ENCODE measurements at regions of chr14 and their contacts with region 1.

Region 1: GRCh38 chr14:75278422-75279161 is at the start of gene FOS:
- DNase-seq: peak; percentile 90 to 95
- ATAC-seq: peak; percentile 76 to 85 (median 83)
- H3K4me3 ChIP-seq: peak within 1 kb of the TSS; percentile 83
- H3K27ac ChIP-seq: peak within 1 kb of the TSS; percentile 98
- H3K4me1 ChIP-seq: peaks cover 30% of the 10 kb centered on the region
- H3K27me3 ChIP-seq: no peaks in the 10 kb centered on the region
- CTCF ChIP-seq: no peak
- total RNA-seq, gene FOS: 20.7 to 279 (median 95.1) TPM

Region 2: DNA sequence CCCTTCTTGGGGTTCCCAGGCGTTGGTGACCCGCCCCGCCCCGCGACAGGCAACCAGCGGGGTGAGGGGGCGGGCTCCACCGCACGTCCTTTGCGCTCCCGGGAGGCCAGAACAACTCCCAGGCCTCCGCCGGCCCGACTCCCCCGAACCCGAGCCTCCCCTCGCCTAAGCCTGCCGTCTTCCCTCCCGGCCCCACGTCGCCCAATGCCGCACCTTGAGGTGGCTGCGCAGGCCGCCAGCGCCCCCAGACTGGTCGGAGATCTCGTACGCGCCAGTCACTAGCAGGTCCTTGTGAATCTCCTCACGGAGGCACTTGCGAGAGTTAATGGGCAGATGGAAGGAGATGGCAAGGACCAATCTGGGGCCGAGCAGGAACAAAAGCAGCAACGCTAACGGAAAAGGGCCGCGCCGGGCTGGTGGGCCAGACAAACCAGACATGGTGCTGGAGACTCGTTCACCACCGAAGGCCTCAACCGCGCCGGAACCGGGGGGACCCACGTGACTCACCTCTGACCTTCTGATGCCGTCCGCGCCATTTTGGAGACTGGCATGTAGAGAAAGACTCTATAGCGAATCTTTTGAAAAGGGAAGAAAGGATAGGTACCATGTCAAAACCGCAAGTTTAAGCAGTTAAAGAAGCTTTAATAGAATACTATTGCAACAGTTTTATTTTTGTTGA is 102.3 kb before region 1 on chr14 and contains the start of gene TMED10:
- intact Hi-C with region 1: loop called in 1 of 2 experiments (anchors 5 kb)
- DNase-seq: peak; percentile 89 to 95
- ATAC-seq: peak; percentile 95
- H3K4me3 ChIP-seq: peak within 1 kb of the TSS; percentile 90
- H3K27ac ChIP-seq: peak within 1 kb of the TSS; percentile 99
- H3K4me1 ChIP-seq: peaks cover 23% of the 10 kb centered on the region
- H3K27me3 ChIP-seq: no peaks in the 10 kb centered on the region
- CTCF ChIP-seq: no peak
- total RNA-seq, gene TMED10: 128 to 203 (median 159) TPM

Region 3: GRCh38 chr14:75258615-75259466 is 19.8 kb before region 1 on chr14:
- intact Hi-C with region 1: loop called (anchors 1 to 2 kb)
- DNase-seq: peak; percentile 98 to 99
- ATAC-seq: peak; percentile 87 to 95 (median 88)
- H3K4me3 ChIP-seq: peak overlapping the region; percentile 61
- H3K27ac ChIP-seq: peak overlapping the region; percentile 95
- H3K4me1 ChIP-seq: peaks cover 33% of the 10 kb centered on the region
- H3K27me3 ChIP-seq: no peaks in the 10 kb centered on the region
- CTCF ChIP-seq: no peak

Region 4: GRCh38 chr14:75427482-75428229 is 149.1 kb after region 1 on chr14 and contains the start of gene JDP2:
- intact Hi-C with region 1: no loop called
- DNase-seq: peak; percentile 95 to 98
- ATAC-seq: peak; percentile 80 to 86 (median 84)
- H3K4me3 ChIP-seq: peak within 1 kb of the TSS; percentile 80
- H3K27ac ChIP-seq: peak within 1 kb of the TSS; percentile 92
- H3K4me1 ChIP-seq: peaks cover 47% of the 10 kb centered on the region
- H3K27me3 ChIP-seq: no peaks in the 10 kb centered on the region
- CTCF ChIP-seq: peak; percentile 23
- total RNA-seq, gene JDP2: 11.0 to 49.6 (median 30.8) TPM

Region 5: DNA sequence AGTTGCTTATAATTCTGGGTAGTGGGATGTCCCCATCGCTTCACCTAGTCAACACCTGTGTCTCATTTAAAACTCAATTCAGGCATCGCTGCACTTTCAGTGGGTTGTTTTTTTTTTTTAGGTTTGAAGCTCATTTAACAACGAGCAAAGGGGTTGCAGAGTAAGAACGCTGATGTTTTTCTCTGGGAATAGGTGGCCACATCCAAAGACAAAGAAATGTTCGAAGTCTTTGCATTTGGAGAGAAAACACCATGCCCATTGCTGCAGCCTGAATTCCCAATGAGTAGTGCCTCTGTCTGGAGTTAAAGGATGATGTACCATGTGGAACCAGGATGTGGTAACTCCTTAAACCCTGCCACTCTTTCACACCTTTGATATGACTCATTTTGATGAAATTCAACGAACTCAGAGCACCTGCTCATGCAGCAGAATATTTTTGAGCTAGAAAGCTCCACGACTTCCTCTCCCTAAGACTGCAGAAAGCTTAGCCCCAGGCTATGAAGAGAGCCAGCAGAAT is 208.6 kb after region 1 on chr14:
- intact Hi-C with region 1: no loop called
- DNase-seq: no peak
- ATAC-seq: no peak
- H3K4me3 ChIP-seq: no peak overlapping the region
- H3K27ac ChIP-seq: no peak overlapping the region
- H3K4me1 ChIP-seq: no peaks in the 10 kb centered on the region
- H3K27me3 ChIP-seq: no peaks in the 10 kb centered on the region
- CTCF ChIP-seq: no peak

Measured in psoas muscle (tissue), 8 donors.